ENCODE measurements at regions of chr12 and their contacts with region 1.

Region 1: GRCh38 chr12:114799574-114800487 is 115.9 kb upstream of the TBX3 start:
- DNase-seq: peak; percentile 82
- ATAC-seq: peak; percentile 98

Region 2: GRCh38 chr12:114726092-114726710 is 73.6 kb before region 1 on chr12:
- intact Hi-C with region 1: no loop called
- DNase-seq: no peak
- ATAC-seq: peak; percentile 93

Region 3: DNA sequence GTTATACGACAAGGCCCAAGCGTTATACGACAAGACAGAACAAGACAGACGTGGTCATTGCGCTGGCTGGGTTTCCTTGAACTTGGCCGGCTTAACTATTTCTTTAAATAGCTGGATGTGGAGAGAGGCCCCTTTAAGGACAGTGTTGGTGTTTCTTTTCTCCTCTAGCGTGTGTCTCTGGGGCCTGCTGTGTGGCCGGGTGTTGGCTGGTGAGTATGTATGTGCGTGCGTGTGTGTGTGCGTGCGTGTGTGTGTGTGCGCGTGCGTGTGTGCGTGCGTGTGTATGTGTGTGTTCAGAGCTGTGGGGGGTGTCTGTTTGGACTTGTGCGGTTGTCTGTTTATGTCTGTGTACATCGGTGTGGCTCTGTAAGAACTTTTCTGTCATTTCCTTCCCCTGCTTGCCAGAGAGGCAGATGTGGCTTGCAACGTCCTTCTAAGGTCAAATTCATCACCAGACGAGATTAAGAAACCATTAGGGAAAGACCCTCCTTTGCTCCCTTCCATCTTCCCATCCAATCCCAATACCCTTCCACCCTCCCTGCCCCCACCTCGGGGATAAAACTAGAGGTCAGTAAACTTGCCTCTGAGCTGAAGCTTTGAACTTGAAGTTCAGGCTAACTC is 37.2 kb before region 1 on chr12:
- intact Hi-C with region 1: loop called (anchors 5 kb)
- DNase-seq: no peak
- ATAC-seq: peak; percentile 77

Region 4: GRCh38 chr12:115060477-115061168 is 260.8 kb after region 1 on chr12:
- intact Hi-C with region 1: no loop called
- DNase-seq: no peak
- ATAC-seq: no peak

Measured in Right ventricle myocardium inferior (tissue), 1 donor.